HepG2 (cell line): ENCODE measurements at regions of chr14 and their contacts with region 1.

Region 1: DNA sequence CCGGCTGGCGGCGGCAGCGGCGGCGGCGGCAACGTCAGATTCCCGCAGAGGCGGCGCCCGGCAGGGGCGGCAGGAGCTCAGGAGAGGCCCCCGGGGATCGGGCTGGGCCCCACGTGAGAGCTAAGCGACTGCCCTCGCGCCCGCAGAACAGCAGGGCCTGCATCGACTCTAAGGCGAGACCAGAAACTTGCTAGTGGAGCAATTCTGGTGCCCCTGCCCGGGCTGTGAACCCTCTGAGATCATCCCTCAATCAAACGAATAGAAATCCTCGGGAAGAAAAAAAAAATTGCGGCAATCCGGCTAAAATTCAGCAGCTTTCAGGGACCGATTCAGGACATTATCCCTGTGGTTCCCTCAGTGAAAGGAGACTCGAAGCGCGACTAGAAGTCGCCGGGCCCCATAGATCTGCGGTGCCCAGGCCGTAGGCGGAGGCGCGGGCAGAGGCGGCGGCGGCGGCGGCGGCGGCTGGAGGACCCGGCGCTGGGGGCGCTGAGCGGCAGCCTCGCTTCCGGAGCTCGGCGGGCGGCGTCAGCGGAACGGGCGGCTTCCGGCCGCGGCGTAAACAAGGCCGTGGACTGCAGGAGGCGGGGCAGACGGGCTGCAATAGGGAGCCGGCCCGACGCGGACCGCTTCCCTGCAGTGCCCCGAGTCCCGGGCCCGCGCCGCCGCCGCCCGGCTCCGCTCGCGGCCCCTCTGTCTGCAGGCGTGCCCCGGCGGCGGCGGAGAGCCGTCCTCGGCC is at the start of gene KLHDC2:
- DNase-seq: peak; percentile 73
- ATAC-seq: peak; percentile 83
- H3K4me3 ChIP-seq: peak within 1 kb of the TSS; percentile 76 to 99 (median 94)
- H3K27ac ChIP-seq: peak within 1 kb of the TSS; percentile 99
- H3K4me1 ChIP-seq: peaks cover 47% of the 10 kb centered on the region
- H3K27me3 ChIP-seq: no peaks in the 10 kb centered on the region; a peak in 1 of 5 replicates
- CTCF ChIP-seq: peak; percentile 73
- EP300 ChIP-seq: no peak
- POLR2A ChIP-seq: peak; percentile 77 to 91
- RAD21 ChIP-seq: no peak; the same call in 1 of the 2 replicates
- total RNA-seq, gene KLHDC2: 80.3 and 95.5 TPM in 2 replicates

Region 2: DNA sequence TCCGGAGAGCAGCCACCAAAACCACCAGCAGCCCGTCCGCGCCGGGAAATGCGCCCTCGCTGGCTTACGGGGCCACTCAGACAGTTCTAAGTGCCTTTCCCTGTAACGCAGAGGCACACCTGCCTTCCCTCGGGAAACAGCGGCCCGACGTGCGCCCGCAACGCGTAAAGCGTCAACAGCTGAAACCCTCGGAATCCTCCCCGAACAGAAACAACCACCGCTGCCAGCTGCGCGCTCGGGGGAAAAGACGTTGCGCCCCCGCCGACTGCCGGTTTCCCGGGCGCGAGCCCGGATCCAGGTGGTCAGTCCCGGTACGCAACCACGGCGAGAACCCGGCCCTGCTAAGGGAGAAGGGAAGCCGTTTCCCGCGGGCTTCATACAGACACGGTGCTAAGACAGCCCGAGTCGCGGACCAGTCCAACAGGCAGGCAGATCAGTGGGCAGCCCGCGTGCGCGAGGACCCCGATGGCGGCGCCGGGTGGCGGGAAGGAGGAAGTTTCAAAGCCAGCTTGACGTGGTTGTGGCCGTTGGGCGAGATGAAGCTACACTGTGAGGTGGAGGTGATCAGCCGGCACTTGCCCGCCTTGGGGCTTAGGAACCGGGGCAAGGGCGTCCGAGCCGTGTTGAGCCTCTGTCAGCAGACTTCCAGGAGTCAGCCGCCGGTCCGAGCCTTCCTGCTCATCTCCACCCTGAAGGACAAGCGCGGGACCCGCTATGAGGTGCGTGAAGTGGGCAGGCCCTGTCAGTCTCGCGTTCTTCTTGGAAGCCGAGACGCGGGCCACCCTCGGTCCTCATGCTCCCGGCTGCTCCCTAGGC is 169.0 kb before region 1 on chr14 and contains the start of gene LRR1:
- CTCF ChIA-PET with region 1: no interaction called
- POLR2A ChIA-PET with region 1: interaction called, 11 read pairs
- in situ Hi-C with region 1: no loop called
- intact Hi-C with region 1: no loop called
- DNase-seq: peak; percentile 76
- ATAC-seq: peak; percentile 76
- H3K4me3 ChIP-seq: peak within 1 kb of the TSS; percentile 79 to 91 (median 83)
- H3K27ac ChIP-seq: peak within 1 kb of the TSS; percentile 97
- H3K4me1 ChIP-seq: peaks cover 39% of the 10 kb centered on the region
- H3K27me3 ChIP-seq: no peaks in the 10 kb centered on the region; a peak in 1 of 5 replicates
- CTCF ChIP-seq: 0 out of 2 replicates have a peak, but pooled peaks have one; percentile 12
- EP300 ChIP-seq: no peak
- POLR2A ChIP-seq: peak; percentile 67 to 93
- RAD21 ChIP-seq: peak; percentile 30
- total RNA-seq, gene LRR1: 36.2 and 49.8 TPM in 2 replicates

Region 3: DNA sequence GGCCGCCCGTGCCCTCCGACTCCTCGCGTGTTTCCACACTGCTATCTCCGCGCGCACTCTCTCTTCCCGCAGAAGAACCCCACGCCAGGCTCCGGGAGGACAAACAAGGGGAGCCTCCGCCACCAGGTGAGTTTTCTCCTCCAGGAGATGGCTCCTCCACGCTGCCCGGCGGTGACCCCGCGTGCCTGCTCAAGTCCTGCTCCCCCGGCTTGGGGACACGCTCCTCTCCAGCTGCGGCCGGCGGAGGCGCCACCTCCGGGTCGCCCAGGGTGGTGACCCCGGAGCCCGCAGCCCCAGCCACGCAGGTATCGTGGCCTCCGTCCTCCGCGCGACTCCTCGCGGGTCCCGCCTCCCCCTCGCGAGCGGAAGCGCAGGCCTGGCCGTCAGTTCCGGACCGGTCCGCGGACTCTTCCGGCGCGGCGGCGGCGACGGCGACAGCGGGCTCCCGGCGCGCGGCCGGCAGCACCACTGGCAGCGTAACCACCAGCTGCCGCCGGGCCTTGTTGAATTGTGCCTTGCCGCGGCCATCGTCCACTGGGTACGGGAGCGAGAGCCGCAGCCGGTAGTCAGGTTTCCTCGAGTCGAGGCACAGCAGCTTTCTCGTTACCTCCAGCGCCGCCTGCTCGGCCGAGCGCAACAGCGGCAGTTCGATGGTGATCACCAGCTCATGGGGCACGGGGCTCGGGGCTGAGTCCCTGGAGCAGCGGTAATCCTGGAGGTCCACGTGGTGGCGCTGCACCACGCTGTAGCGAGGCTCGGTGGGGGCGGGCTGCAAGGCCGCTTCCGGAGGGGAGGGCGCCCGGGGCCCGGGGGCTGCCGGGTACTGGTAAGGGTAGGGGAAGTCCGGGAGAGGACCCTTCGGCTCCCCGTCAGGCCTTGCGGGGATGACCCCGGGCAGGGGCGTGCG is 133.8 kb before region 1 on chr14:
- CTCF ChIA-PET with region 1: no interaction called
- POLR2A ChIA-PET with region 1: interaction called, 76 read pairs
- in situ Hi-C with region 1: loop called (anchors 5 kb)
- intact Hi-C with region 1: loop called (anchors 1 kb)
- DNase-seq: peak; percentile 89
- ATAC-seq: peak; percentile 85
- H3K4me3 ChIP-seq: peak overlapping the region; percentile 87 to 99 (median 96)
- H3K27ac ChIP-seq: peak overlapping the region; percentile 93
- H3K4me1 ChIP-seq: peaks cover 54% of the 10 kb centered on the region
- H3K27me3 ChIP-seq: no peaks in the 10 kb centered on the region; a peak in 1 of 5 replicates
- CTCF ChIP-seq: peak; percentile 99
- EP300 ChIP-seq: no peak
- POLR2A ChIP-seq: peak; percentile 74 to 83
- RAD21 ChIP-seq: peak; percentile 93

Region 4: DNA sequence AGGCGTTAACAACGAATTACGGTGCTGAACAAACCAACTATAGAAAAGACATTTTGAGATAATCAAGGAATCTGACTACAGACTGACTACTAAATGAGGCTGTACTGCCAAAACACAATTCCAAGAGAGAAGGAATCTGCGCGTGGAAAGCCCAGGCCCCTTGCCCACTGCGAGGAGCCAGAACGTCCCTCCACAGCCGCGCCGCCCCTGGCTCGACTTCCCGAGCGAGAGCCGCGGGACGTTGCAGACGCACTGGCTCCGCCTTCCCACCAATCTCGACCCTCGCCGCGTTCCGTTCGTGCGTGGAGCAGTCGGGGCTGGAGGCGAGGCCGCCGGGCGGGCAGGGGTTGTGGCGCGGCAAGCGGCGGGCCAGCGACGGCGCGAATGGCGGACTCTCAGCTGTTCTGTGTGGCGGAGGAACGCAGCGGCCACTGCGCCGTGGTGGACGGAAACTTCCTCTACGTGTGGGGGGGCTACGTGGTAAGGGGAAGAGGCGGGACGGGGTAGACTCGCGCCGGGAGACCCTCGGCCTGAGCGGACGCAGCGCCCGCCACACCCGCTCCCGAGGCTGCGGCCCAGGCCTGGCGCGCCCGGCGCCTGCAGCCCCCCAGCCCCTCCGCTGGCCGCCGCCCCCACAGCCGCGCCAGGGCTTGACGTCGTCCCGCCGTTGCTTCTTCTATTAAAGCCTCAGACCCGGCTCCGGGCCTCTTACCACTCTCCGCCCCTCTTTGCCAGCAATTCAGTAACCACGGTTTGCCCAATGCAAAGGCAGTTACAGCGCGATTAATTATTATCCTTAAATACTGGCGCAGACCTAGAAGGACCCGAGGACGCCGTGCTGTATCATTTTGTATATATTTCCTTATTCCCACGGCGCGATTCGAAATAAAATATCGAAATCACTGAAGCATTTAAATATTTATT is 74.7 kb before region 1 on chr14 and contains the start of gene KLHDC1:
- CTCF ChIA-PET with region 1: no interaction called
- POLR2A ChIA-PET with region 1: interaction called, 64 read pairs
- in situ Hi-C with region 1: loop called (anchors 10 kb)
- intact Hi-C with region 1: loop called (anchors 2 kb)
- DNase-seq: peak; percentile 66
- ATAC-seq: peak; percentile 83
- H3K4me3 ChIP-seq: peak within 1 kb of the TSS; percentile 67 to 88 (median 75)
- H3K27ac ChIP-seq: peak within 1 kb of the TSS; percentile 77
- H3K4me1 ChIP-seq: peaks cover 39% of the 10 kb centered on the region
- H3K27me3 ChIP-seq: no peaks in the 10 kb centered on the region; a peak in 1 of 5 replicates
- CTCF ChIP-seq: peak; percentile 35; the same call in 1 of the 2 replicates
- EP300 ChIP-seq: no peak
- POLR2A ChIP-seq: peak; percentile 50 to 70; a peak in 3 of 4 replicates
- RAD21 ChIP-seq: 0 out of 2 replicates have a peak, but pooled peaks have one; percentile 31
- total RNA-seq, gene KLHDC1: 0.11 TPM in 1 of 2 replicates, not detected in the other

Region 5: GRCh38 chr14:49727171-49727570 is 40.6 kb before region 1 on chr14:
- CTCF ChIA-PET with region 1: no interaction called
- POLR2A ChIA-PET with region 1: interaction called, 30 read pairs
- in situ Hi-C with region 1: no loop called
- intact Hi-C with region 1: no loop called
- DNase-seq: peak; percentile 3
- ATAC-seq: no peak
- H3K4me3 ChIP-seq: no peak overlapping the region
- H3K27ac ChIP-seq: no peak overlapping the region
- H3K4me1 ChIP-seq: peaks cover 7% of the 10 kb centered on the region
- H3K27me3 ChIP-seq: no peaks in the 10 kb centered on the region
- CTCF ChIP-seq: no peak
- EP300 ChIP-seq: no peak
- POLR2A ChIP-seq: no peak
- RAD21 ChIP-seq: no peak

Region 6: DNA sequence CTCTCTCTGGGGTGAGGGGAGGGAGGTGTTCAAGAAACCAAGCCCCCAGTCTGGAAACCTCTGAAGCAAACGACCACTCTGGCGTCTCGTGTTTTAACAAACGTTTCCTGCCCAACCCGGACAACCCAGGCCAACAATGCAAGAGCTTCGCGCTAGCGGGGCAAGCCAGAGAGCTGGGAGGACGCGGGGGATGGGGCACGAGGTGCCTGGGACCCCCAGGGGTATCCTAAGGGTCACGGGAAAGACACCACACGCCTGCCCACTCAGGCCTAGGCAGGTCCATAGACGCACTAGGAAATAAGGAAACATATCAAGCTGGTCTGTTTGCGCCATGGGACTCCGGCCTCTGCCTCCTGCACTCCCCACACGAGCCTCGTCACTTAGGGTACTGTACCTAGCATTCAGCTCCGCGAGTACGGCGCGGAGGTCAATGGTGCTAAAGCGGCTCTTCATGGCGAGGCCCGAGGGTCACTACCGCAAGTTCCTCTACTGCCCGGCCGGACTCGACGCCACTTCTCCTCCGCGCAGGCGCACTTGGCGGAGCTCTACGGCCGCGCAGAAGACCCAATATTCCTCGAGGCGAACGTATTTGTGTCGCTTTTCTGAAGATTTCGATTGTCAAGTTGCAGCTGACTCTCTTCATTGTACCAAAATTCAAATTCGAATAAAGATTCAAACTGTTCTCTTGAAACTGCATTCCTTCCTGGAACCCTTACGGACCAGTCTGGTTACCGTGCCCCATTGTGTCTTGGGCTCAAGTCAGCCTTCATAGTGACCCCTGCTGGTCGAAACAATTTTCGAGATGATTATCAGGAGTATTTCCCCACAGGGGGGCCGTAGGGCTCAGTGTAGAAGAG is 84.8 kb after region 1 on chr14 and contains the start of gene NEMF:
- CTCF ChIA-PET with region 1: no interaction called
- POLR2A ChIA-PET with region 1: interaction called, 14 read pairs
- in situ Hi-C with region 1: no loop called
- intact Hi-C with region 1: no loop called
- DNase-seq: peak; percentile 87
- ATAC-seq: peak; percentile 87
- H3K4me3 ChIP-seq: peak within 1 kb of the TSS; percentile 95 to 97 (median 96)
- H3K27ac ChIP-seq: peak within 1 kb of the TSS; percentile 89
- H3K4me1 ChIP-seq: peaks cover 19% of the 10 kb centered on the region
- H3K27me3 ChIP-seq: no peaks in the 10 kb centered on the region; a peak in 1 of 5 replicates
- CTCF ChIP-seq: peak; percentile 83
- EP300 ChIP-seq: no peak
- POLR2A ChIP-seq: peak; percentile 90 to 93
- RAD21 ChIP-seq: no peak; the same call in 1 of the 2 replicates
- total RNA-seq, gene NEMF: 57.9 and 62.5 TPM in 2 replicates

Region 7: GRCh38 chr14:50099335-50099734 is 331.6 kb after region 1 on chr14:
- CTCF ChIA-PET with region 1: no interaction called
- POLR2A ChIA-PET with region 1: no interaction called
- in situ Hi-C with region 1: no loop called
- intact Hi-C with region 1: no loop called
- DNase-seq: peak; percentile 25
- ATAC-seq: peak; percentile 71
- H3K4me3 ChIP-seq: no peak overlapping the region
- H3K27ac ChIP-seq: no peak overlapping the region
- H3K4me1 ChIP-seq: peaks cover 25% of the 10 kb centered on the region
- H3K27me3 ChIP-seq: no peaks in the 10 kb centered on the region
- CTCF ChIP-seq: no peak
- EP300 ChIP-seq: no peak
- POLR2A ChIP-seq: no peak
- RAD21 ChIP-seq: no peak